IMR-90 (cell line): ENCODE measurements at regions of chr12 and their contacts with region 1.

Region 1: DNA sequence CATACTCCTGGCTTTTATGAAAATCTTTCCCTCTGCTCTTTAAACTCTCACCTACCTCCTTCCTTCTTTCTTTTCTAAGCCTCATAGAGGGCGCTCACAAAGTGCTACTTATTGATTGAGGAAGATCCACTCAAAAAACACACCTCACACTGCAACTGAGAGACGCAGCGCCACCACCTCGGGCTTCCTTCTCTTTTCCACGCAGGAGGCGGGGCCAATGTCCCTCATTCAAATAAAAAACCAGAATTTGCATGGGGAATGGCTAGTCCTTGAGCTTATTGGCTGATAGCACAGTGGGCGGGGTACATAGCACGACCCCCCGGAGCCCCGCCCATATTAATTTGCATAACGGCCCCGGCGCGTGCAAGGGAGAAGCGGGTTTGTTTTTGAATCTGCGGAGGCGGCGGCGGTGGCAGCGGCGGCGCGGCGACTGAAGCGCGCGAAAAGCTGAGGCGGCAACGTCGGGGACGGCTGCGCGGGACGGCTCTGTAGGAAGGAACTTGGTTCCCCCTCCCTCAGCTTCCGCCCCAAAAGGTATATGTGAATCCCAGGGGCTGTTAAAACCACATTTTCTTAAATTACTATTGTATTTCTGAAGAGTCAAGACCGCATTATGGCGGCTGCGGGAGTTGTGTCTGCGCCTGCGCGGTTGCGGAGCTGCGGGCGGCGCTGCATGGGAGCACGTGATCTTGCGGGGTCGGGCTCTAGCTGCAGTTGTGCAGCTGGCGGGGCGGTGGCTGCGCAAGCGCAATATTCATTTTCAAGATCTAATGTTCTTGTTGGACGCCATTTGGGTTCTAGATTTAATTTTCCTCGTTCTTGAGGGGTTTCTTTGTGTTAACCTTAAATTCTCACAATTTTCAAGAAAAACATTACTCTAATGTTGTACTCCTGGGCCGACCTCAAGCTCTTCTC is at the start of gene ATF7IP:
- DNase-seq: peak; percentile 96
- ATAC-seq: peak; percentile 99
- H3K4me3 ChIP-seq: peak within 1 kb of the TSS; percentile 75
- H3K27ac ChIP-seq: peak within 1 kb of the TSS; percentile 88
- H3K4me1 ChIP-seq: no peaks in the 10 kb centered on the region; the same call in 1 of the 2 replicates
- H3K27me3 ChIP-seq: no peaks in the 10 kb centered on the region
- CTCF ChIP-seq: peak; percentile 35
- POLR2A ChIP-seq: peak; percentile 74
- RAD21 ChIP-seq: no peak
- total RNA-seq, gene ATF7IP: 22.8 and 30.6 TPM in 2 replicates

Region 2: GRCh38 chr12:14185427-14186192 is 179.9 kb before region 1 on chr12:
- CTCF ChIA-PET with region 1: no interaction called
- POLR2A ChIA-PET with region 1: no interaction called
- dilution Hi-C with region 1: no loop called
- in situ Hi-C with region 1: no loop called
- intact Hi-C with region 1: loop called (anchors 5 kb)
- DNase-seq: peak; percentile 38
- ATAC-seq: peak; percentile 83
- H3K4me3 ChIP-seq: no peak overlapping the region
- H3K27ac ChIP-seq: no peak overlapping the region
- H3K4me1 ChIP-seq: no peaks in the 10 kb centered on the region
- H3K27me3 ChIP-seq: no peaks in the 10 kb centered on the region
- CTCF ChIP-seq: peak; percentile 62
- POLR2A ChIP-seq: no peak
- RAD21 ChIP-seq: peak; percentile 50; the same call in 1 of the 2 replicates

Region 3: GRCh38 chr12:14257734-14258574 is 107.6 kb before region 1 on chr12:
- CTCF ChIA-PET with region 1: interaction called, 8 read pairs
- POLR2A ChIA-PET with region 1: no interaction called
- dilution Hi-C with region 1: no loop called
- in situ Hi-C with region 1: loop called (anchors 10 kb)
- intact Hi-C with region 1: loop called (anchors 1 kb)
- DNase-seq: peak; percentile 100
- ATAC-seq: peak; percentile 78
- H3K4me3 ChIP-seq: no peak overlapping the region
- H3K27ac ChIP-seq: peak overlapping the region; percentile 89
- H3K4me1 ChIP-seq: peaks cover 18% of the 10 kb centered on the region
- H3K27me3 ChIP-seq: no peaks in the 10 kb centered on the region
- CTCF ChIP-seq: 0 out of 2 replicates have a peak, but pooled peaks have one; percentile 1
- POLR2A ChIP-seq: no peak
- RAD21 ChIP-seq: peak; percentile 25; the same call in 1 of the 2 replicates

Region 4: DNA sequence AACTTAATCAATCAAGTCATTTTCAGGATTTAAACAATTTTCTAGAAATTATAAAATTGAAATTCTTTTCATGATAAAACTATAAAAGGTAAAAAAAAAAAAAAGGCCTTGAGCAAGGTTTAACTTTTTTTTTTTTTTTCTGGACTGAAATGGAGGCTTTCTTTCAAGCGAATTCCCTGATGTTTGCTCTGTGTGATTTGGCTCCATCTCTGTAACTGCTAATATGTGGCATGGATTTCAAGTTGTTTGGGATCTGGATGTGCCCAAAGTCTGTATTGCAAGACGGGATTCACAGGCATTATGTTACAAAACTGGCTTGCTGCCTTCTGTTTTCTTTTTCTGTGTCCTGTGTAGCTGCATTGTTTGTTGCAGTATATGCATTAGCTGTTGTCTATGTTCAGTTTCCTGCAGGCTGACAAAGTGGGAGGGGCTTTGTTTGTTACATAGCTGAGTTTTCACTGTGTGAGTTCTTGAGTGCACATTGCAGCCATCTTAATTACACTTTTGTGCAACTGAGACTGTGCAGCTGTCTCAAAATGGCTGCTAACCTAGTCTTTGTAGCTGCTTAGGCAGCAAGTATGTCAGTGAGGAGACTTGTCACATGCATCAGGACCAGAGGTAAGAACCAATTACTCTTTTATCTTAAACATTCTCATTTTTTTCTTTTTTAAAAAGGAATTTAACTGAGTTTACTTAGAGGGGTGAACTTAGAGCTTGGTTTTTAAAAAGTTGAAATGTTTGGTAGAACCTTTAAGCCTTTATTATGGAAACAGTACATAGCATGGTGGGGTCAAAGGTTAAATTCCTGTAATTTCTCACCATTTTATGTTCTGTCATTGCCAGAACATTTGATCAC is 19.5 kb after region 1 on chr12:
- CTCF ChIA-PET with region 1: interaction called, 4 read pairs
- POLR2A ChIA-PET with region 1: no interaction called
- dilution Hi-C with region 1: no loop called
- in situ Hi-C with region 1: no loop called
- intact Hi-C with region 1: loop called (anchors 2 kb)
- DNase-seq: peak; percentile 95
- ATAC-seq: peak; percentile 93
- H3K4me3 ChIP-seq: peak overlapping the region; percentile 36
- H3K27ac ChIP-seq: peak overlapping the region; percentile 39; the same call in 1 of the 2 replicates
- H3K4me1 ChIP-seq: no peaks in the 10 kb centered on the region
- H3K27me3 ChIP-seq: no peaks in the 10 kb centered on the region
- CTCF ChIP-seq: no peak
- POLR2A ChIP-seq: no peak
- RAD21 ChIP-seq: no peak

Region 5: GRCh38 chr12:14618983-14619382 is 253.4 kb after region 1 on chr12:
- CTCF ChIA-PET with region 1: interaction called, 3 read pairs
- POLR2A ChIA-PET with region 1: no interaction called
- dilution Hi-C with region 1: no loop called
- in situ Hi-C with region 1: no loop called
- intact Hi-C with region 1: loop called (anchors 5 kb)
- DNase-seq: peak; percentile 16
- ATAC-seq: peak; percentile 56; the same call in 1 of the 2 replicates
- H3K4me3 ChIP-seq: no peak overlapping the region
- H3K27ac ChIP-seq: no peak overlapping the region
- H3K4me1 ChIP-seq: no peaks in the 10 kb centered on the region
- H3K27me3 ChIP-seq: no peaks in the 10 kb centered on the region
- CTCF ChIP-seq: peak; percentile 42
- POLR2A ChIP-seq: no peak
- RAD21 ChIP-seq: peak; percentile 39; the same call in 1 of the 2 replicates